PC-9 (cell line): ENCODE measurements at regions of chr1 and their contacts with region 1.

Region 1: GRCh38 chr1:83931658-83932253 is 67.2 kb downstream of the TTLL7 start:
- DNase-seq: peak in 1 of 2 experiments; percentile 6
- H3K4me3 ChIP-seq: no peak overlapping the region
- H3K27ac ChIP-seq: no peak overlapping the region
- H3K4me1 ChIP-seq: no peaks in the 10 kb centered on the region
- H3K27me3 ChIP-seq: no peaks in the 10 kb centered on the region
- CTCF ChIP-seq: peak; percentile 89

Region 2: DNA sequence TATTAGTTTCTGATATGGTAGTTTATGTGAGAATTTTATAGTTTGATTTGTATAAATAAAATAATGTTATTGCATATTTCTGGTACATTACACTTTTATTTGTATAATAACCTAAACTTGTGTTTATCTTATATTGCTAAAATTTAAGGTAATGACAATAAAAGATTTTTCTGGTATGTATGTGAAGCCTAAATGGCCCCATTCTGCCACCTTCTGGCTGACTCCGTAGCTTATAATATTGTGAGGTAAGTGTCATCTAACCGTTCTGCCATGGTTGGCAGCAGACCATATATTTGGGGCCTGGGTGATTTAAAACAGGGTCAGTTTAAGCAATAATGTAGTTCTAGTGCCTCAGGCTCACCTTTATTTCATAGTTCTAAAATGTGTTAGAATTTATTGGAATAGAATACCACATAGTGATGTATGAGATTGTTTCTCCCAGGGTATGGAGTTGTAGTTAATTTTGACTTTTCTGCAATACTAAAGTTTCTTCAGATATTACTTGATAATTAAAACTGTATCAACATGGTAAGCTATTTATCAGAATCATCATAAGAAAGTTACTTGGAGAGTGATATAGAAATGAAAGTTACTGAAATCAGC is 191.1 kb after region 1 on chr1:
- CTCF ChIA-PET with region 1: interaction called, 5 read pairs
- POLR2A ChIA-PET with region 1: no interaction called
- intact Hi-C with region 1: loop called (anchors 1 kb)
- DNase-seq: peak in 1 of 2 experiments; percentile 28
- H3K4me3 ChIP-seq: no peak overlapping the region
- H3K27ac ChIP-seq: no peak overlapping the region
- H3K4me1 ChIP-seq: no peaks in the 10 kb centered on the region
- H3K27me3 ChIP-seq: no peaks in the 10 kb centered on the region
- CTCF ChIP-seq: peak; percentile 87

Region 3: DNA sequence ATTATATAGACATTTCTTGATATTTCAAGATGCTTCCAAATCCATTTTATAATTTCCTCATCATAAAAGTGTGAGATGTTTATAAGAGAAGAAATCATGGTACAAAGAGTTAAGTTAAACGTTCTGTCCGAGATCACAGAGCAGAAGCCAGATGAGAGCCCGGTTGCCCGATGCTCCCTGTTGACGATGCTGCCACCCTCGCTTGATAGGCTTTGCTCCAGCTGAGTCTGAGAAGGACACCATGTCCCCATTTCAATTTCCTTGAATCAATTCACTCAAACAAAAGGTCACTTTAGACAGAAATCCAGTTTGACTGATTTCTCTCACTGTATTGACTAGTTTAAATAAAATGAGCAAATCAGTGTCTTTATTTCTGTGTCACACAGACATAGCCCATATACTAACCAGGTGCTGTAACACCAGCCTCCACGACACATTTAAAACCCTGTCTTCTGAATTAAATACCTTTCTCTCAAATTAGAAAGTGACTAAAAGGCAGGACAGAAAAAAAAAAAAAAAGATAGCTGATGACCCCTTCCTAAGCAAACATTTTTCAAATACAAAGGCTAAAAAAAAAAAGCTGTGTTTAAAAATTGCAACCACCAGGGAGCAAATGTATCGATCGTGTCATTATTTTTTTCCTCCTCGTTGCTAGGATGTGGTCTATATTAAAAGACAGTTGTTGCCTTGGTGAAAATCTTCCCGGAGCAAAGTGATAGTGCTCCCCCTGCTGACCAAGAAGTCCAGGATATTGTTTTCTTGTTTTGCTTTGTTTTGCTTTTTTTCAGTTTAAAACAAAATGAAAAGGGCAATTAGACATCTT is 501.7 kb after region 1 on chr1:
- CTCF ChIA-PET with region 1: no interaction called
- POLR2A ChIA-PET with region 1: interaction called, 3 read pairs
- intact Hi-C with region 1: loop called (anchors 2 kb)
- DNase-seq: peak; percentile 43 to 79
- H3K4me3 ChIP-seq: peak overlapping the region; percentile 14; the same call in 1 of the 2 replicates
- H3K27ac ChIP-seq: no peak overlapping the region
- H3K4me1 ChIP-seq: peaks cover 17% of the 10 kb centered on the region
- H3K27me3 ChIP-seq: no peaks in the 10 kb centered on the region
- CTCF ChIP-seq: peak; percentile 93

Region 4: GRCh38 chr1:84541679-84542078 is 609.9 kb after region 1 on chr1:
- CTCF ChIA-PET with region 1: no interaction called
- POLR2A ChIA-PET with region 1: no interaction called
- intact Hi-C with region 1: loop called (anchors 2 kb)
- DNase-seq: no peak
- H3K4me3 ChIP-seq: no peak overlapping the region
- H3K27ac ChIP-seq: no peak overlapping the region
- H3K4me1 ChIP-seq: no peaks in the 10 kb centered on the region
- H3K27me3 ChIP-seq: no peaks in the 10 kb centered on the region
- CTCF ChIP-seq: peak; percentile 62; the same call in 1 of the 2 replicates

Region 5: DNA sequence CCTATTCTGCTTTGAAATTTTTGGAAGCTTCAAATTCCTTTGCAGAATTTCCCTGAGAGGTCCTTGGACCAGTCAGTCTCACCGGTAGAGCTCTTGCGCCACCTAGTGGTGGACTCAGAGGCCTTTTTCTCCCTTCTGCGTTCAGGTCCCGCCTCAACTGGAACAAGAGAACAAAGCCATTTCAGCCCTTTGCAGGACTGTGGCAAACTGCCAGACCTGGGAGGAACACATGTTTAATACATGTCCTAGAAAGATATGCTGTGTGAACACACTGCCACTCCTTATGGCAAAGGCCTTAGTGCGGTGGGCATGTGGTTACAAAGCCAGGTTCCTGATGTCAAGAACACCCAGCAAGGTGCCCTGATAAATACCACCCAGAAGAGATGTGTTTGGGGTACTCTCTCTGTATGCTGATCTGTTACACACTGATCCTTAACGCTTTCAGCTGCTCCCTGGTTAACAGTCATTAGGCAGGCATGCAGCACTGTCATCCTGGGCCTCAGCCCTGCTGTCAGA is 840.7 kb after region 1 on chr1:
- CTCF ChIA-PET with region 1: no interaction called
- POLR2A ChIA-PET with region 1: no interaction called
- intact Hi-C with region 1: loop called (anchors 5 kb)
- DNase-seq: peak; percentile 53 to 65
- H3K4me3 ChIP-seq: no peak overlapping the region
- H3K27ac ChIP-seq: no peak overlapping the region
- H3K4me1 ChIP-seq: no peaks in the 10 kb centered on the region
- H3K27me3 ChIP-seq: no peaks in the 10 kb centered on the region
- CTCF ChIP-seq: peak; percentile 98